ENCODE measurements at regions of chr1 and their contacts with region 1.

Region 1: DNA sequence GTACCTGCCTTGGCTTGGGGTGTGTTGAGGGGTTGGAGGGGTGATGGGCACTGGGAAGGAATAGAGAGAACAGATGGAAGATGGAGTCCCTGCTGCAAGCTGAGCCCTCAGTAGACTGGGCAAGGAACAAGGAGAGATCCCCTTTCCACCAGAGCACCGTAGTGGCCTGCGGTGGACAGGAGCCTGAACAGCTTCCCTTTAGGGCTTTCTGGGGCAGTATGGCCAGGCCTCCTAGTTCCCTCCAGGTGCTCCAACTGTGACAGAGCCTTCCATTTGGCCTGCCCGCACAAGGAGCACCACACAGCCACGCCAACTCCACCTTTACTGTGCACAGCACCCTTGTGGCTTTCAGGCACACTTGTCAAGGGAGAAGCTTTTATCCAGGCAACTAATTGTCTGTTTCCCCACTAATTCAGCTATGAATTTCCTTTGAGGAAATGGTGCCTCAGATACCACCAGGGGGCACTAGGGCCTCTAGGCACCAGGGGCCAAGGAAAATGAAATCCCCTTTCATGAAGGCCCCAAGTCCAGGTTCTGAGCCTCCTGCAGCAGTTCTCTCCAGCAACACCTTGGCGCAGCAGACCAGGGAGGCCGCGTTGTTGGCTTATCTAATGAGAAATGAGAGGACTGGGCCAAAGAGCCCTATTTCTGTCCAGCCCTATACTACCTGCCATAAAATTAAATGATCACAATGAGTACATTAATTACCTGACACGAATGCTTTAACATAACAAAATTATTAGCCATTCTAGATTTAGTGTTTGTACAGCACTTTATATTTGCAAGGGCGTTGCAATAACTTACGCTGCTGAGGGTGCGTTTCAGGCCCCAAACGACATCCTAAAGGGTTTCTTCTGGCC is 23.1 kb upstream of the ERI3 start:
- DNase-seq: peak; percentile 24
- H3K4me3 ChIP-seq: no peak overlapping the region
- H3K27ac ChIP-seq: no peak overlapping the region
- H3K4me1 ChIP-seq: no peaks in the 10 kb centered on the region
- H3K27me3 ChIP-seq: no peaks in the 10 kb centered on the region
- CTCF ChIP-seq: peak in 3 of 4 experiments; percentile 48 to 75 (median 58)
- POLR2A ChIP-seq: no peak

Region 2: DNA sequence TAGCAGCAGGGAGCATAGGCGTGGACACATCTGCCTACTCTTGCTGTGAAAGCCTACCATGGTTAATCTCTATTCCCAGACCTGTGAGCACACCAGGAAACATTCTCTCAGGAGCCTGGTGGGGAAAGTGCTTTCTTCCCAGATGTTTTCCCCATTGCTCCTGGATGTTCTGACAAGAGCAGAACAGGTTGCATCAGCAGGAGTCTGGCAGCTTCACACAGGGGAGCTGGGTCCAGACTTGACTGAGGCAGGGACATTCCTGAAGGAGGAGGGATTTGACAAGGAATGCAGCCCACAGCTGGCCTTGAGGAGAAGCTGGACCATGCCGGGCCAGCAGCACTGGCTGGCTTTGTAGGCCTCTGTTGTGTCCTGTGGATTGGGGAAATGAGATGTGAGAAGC is 465.5 kb before region 1 on chr1:
- intact Hi-C with region 1: no loop called
- DNase-seq: peak; percentile 63
- H3K4me3 ChIP-seq: no peak overlapping the region
- H3K27ac ChIP-seq: peak overlapping the region; percentile 34 to 63
- H3K4me1 ChIP-seq: no peaks in the 10 kb centered on the region
- H3K27me3 ChIP-seq: no peaks in the 10 kb centered on the region
- CTCF ChIP-seq: no peak
- POLR2A ChIP-seq: no peak

Region 3: DNA sequence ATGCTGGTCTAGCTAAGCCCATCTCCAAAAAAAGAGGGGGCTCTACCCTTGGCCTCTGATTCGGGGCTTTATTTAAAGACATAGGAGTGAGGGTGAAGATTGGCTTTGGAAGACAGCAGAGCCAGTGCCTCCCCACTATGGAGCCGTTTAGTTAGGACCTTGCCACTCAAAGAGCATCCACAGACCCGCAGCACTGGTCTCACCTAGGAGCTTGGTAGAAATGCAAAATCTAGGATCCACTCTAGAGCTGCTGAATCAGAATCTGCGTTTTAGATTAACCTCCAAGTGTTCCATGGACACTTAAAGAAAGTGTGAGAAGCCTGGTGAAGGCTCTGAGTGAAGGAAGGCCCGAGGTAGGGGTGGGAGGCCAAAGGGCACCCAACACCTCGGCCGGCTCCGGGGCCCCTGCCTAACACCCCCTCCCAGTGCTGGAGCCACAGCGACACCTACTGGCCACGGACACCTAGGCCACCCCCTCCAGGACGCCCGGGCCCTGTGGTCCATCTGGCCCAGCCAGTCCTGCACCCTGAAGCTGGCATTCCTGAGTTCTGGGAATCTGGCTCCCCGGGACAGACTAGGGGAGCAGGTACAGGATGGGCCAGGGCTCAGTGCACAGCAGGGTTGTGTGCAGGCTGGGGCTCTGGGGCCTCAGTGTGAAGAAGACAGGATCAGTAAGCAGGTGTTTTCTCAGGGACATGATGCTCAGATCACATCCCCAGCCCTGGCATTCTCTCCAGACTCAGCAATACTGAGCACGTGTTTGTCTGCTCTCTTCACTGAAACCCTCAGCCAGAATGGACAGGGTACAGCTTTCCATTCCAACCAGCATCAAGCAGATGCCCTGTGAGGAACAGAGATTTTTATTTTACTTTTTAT is 217.0 kb after region 1 on chr1:
- intact Hi-C with region 1: loop called (anchors 5 kb)
- DNase-seq: peak; percentile 69
- H3K4me3 ChIP-seq: no peak overlapping the region
- H3K27ac ChIP-seq: no peak overlapping the region
- H3K4me1 ChIP-seq: no peaks in the 10 kb centered on the region
- H3K27me3 ChIP-seq: peaks cover 1% of the 10 kb centered on the region
- CTCF ChIP-seq: peak; percentile 93 to 95 (median 95)
- POLR2A ChIP-seq: no peak

Region 4: GRCh38 chr1:44652445-44653106 is 274.4 kb after region 1 on chr1:
- intact Hi-C with region 1: loop called (anchors 10 kb)
- DNase-seq: peak; percentile 63
- H3K4me3 ChIP-seq: no peak overlapping the region
- H3K27ac ChIP-seq: no peak overlapping the region
- H3K4me1 ChIP-seq: peaks cover 11% of the 10 kb centered on the region
- H3K27me3 ChIP-seq: no peaks in the 10 kb centered on the region
- CTCF ChIP-seq: peak; percentile 86 to 94 (median 92)
- POLR2A ChIP-seq: no peak

Measured in prostate gland (tissue), 2 donors.